Right ventricle myocardium superior (tissue), 1 donor: ENCODE measurements at regions of chr6 and their contacts with region 1.

Region 1: DNA sequence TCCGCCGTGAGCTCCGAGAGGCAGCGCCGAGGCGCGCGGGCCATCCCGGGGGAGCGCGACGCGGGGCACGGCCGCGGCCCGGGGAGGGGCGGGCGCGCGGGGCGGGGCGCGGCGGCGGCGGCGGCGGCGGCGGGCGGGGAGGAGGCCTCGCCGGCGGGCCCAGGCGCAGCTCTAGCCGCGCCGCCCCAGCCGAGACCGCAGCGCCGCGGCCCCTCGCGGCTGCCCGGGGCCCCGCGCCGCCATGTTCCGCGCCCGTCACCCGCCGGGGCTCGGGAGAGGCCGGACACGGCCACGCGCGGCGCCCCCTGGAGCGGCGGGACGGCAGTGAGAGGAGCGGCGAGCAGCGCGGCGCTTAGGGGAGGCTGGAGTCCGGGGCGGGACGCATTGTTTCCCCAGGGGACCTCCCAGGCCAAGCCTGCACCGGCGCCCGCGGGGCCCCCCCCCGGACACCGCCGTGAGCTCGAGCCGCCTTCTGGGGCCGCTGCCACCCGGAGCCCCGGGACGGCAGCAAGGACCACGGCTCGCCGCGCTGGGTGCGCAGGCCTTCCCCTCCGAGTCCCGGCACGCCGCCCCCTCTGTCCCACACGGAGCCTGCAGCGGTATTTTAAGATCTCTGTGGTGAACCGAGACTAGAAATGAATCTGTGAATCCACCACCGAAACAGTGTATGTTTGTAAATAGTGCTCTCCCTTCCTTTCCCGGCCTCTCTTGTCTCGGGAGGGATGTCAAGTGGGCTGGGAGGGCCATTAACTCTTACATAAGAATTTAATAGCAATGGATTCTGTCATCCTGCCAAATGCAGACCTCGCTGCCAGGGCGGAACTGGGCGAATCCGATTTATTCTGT is at the start of gene KIF13A:
- DNase-seq: peak; percentile 85
- ATAC-seq: peak; percentile 84
- total RNA-seq, gene KIF13A: 52.7 TPM

Region 2: GRCh38 chr6:17865798-17866725 is 121.7 kb before region 1 on chr6:
- intact Hi-C with region 1: loop called (anchors 10 kb)
- DNase-seq: peak; percentile 71
- ATAC-seq: peak; percentile 69

Region 3: GRCh38 chr6:18122124-18123093 is 134.6 kb after region 1 on chr6 and contains the start of gene NHLRC1:
- intact Hi-C with region 1: loop called (anchors 5 kb)
- DNase-seq: peak; percentile 94
- ATAC-seq: peak; percentile 100
- total RNA-seq, gene NHLRC1: 1.2 TPM